HEK293 (cell line): ENCODE measurements at regions of chr14 and their contacts with region 1.

Region 1: DNA sequence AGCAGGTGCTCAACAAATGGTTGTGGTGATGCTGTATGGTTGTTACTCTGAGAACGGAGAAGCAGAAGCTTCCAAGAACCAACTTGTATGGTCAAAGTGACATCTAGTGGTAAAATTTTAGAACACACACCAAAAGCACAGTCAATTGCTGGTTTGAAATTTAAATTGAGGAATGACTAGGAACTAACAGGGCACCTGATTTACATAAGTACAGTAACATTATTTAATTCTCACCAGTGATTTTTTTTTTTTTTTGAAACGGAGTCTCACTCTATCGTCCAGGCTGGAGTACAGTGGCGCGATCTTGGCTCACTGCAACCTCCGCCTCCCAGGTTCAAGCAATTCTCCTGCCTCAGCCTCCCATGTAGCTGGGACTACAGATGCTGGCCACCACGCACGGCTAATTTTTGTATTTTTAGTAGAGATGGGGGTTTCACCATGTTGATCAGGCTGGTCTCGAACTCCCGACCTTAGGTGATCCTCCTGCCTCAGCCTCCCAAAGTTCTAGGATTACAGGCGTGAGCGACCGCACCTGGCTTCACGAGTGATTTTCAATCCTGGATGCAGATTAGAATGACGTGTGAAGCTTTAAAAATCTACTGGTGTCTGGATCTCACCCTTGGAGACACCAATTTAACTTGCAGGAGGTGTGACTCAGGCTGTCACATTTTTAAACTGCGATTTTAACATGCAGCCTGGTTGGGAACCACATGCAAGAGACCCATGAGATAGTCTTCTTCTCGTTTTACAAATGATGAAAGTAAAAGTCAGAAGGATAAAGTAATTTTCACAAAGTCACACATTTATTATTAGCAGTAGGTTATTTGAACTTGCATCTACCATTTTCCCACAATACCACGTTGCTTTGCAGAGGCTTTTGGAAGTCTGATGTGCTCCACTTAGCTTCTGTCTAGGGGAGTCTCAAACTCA is 14.1 kb upstream of the NUMB start:
- H3K4me3 ChIP-seq: no peak overlapping the region
- H3K27ac ChIP-seq: no peak overlapping the region
- H3K4me1 ChIP-seq: no peaks in the 10 kb centered on the region
- CTCF ChIP-seq: peak; percentile 31; the same call in 1 of the 2 replicates

Region 2: GRCh38 chr14:73173092-73173735 is 299.2 kb before region 1 on chr14:
- CTCF ChIA-PET with region 1: interaction called, 31 read pairs
- POLR2A ChIA-PET with region 1: no interaction called
- H3K4me3 ChIP-seq: no peak overlapping the region
- H3K27ac ChIP-seq: no peak overlapping the region
- H3K4me1 ChIP-seq: no peaks in the 10 kb centered on the region
- CTCF ChIP-seq: no peak

Region 3: GRCh38 chr14:73283608-73284379 is 188.7 kb before region 1 on chr14:
- CTCF ChIA-PET with region 1: interaction called, 11 read pairs
- POLR2A ChIA-PET with region 1: no interaction called
- H3K4me3 ChIP-seq: no peak overlapping the region
- H3K27ac ChIP-seq: peak overlapping the region; percentile 30; the same call in 1 of the 2 replicates
- H3K4me1 ChIP-seq: no peaks in the 10 kb centered on the region
- CTCF ChIP-seq: no peak

Region 4: GRCh38 chr14:73886449-73887317 is 414.2 kb after region 1 on chr14 and contains the start of gene ZNF410:
- CTCF ChIA-PET with region 1: no interaction called
- POLR2A ChIA-PET with region 1: no interaction called
- H3K4me3 ChIP-seq: peak within 1 kb of the TSS; percentile 91
- H3K27ac ChIP-seq: peak within 1 kb of the TSS; percentile 86
- H3K4me1 ChIP-seq: no peaks in the 10 kb centered on the region; the same call in 1 of the 2 replicates
- CTCF ChIP-seq: no peak